A549 (cell line): ENCODE measurements at regions of chr4 and their contacts with region 1.

Region 1: DNA sequence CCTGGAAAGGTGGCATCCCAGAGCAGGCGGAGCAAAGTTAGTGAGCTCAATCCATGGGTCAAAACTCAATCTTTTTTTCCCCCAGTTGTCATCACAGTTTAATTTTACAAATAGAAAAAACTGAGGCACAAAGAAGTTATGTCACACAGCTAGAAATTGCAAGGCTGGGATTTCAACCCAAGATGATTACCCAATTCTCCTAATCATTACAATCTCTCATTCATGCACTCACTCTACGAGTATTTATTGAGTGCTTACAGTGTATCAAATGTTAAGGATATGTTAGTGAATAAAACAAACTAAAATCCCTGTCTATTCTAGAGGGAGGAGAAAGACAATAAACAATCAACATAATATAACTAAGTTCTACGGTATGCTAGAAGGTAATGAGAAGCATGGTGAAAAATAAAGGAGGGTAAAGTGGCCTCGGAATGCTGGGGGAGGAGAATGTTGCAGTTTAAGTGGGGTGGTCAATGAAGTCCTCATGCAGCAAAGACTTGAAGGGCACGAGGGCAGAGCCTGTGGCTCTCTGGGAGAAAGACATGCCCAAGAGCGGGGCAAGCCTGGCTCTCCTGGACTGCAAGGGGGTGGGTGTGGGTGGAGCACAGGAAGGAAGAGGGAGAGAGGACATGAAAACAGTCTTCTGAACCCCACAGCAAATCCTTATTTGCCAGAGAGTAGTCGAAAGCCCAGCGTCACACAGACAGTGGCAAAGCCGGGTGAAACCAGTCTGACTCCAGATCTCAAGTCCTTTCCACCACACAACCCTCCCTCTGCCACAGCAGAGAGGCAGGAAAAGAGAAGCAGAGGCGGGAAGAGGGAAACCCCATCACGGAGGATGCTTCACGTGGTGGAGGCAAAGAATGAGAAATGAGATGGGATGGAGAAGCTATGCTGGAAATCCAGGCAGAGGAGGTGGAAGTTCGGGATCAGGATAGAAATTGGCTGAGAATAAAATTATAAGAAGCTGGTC is 48.3 kb downstream of the RAB33B start:
- DNase-seq: no peak
- ATAC-seq: peak; percentile 19 to 37; a peak in 5 of 6 replicates
- H3K4me3 ChIP-seq: no peak overlapping the region
- H3K27ac ChIP-seq: no peak overlapping the region
- H3K4me1 ChIP-seq: no peaks in the 10 kb centered on the region
- CTCF ChIP-seq: no peak
- EP300 ChIP-seq: no peak
- POLR2A ChIP-seq: no peak
- RAD21 ChIP-seq: no peak

Region 2: GRCh38 chr4:139484783-139485318 is 17.4 kb before region 1 on chr4:
- CTCF ChIA-PET with region 1: interaction called, 24 read pairs
- POLR2A ChIA-PET with region 1: no interaction called
- DNase-seq: no peak
- ATAC-seq: no peak; a peak in 2 of 6 replicates
- H3K4me3 ChIP-seq: no peak overlapping the region
- H3K27ac ChIP-seq: no peak overlapping the region
- H3K4me1 ChIP-seq: no peaks in the 10 kb centered on the region
- CTCF ChIP-seq: no peak
- EP300 ChIP-seq: no peak
- POLR2A ChIP-seq: no peak
- RAD21 ChIP-seq: no peak

Region 3: GRCh38 chr4:139633661-139634060 is 131.4 kb after region 1 on chr4:
- CTCF ChIA-PET with region 1: interaction called, 18 read pairs
- POLR2A ChIA-PET with region 1: interaction called, 3 read pairs
- DNase-seq: peak; percentile 17 to 42
- ATAC-seq: peak; percentile 78 to 93
- H3K4me3 ChIP-seq: 0 out of 3 replicates have a peak overlapping the region, but pooled peaks have one; percentile 6
- H3K27ac ChIP-seq: peak overlapping the region; percentile 37 to 77
- H3K4me1 ChIP-seq: peaks cover 15% of the 10 kb centered on the region
- CTCF ChIP-seq: peak; percentile 58
- EP300 ChIP-seq: no peak
- POLR2A ChIP-seq: no peak
- RAD21 ChIP-seq: peak; percentile 82 to 83

Region 4: GRCh38 chr4:139913398-139913990 is 411.3 kb after region 1 on chr4:
- CTCF ChIA-PET with region 1: no interaction called
- POLR2A ChIA-PET with region 1: no interaction called
- DNase-seq: no peak
- ATAC-seq: peak in 1 of 2 experiments; percentile 37; a peak in 3 of 6 replicates
- H3K4me3 ChIP-seq: no peak overlapping the region
- H3K27ac ChIP-seq: peak overlapping the region in 1 of 2 experiments; percentile 62; a peak in 1 of 6 replicates
- H3K4me1 ChIP-seq: peaks cover 36% of the 10 kb centered on the region
- CTCF ChIP-seq: no peak
- EP300 ChIP-seq: no peak
- POLR2A ChIP-seq: no peak
- RAD21 ChIP-seq: no peak